ENCODE measurements at regions of chr4 and their contacts with region 1.

Region 1: DNA sequence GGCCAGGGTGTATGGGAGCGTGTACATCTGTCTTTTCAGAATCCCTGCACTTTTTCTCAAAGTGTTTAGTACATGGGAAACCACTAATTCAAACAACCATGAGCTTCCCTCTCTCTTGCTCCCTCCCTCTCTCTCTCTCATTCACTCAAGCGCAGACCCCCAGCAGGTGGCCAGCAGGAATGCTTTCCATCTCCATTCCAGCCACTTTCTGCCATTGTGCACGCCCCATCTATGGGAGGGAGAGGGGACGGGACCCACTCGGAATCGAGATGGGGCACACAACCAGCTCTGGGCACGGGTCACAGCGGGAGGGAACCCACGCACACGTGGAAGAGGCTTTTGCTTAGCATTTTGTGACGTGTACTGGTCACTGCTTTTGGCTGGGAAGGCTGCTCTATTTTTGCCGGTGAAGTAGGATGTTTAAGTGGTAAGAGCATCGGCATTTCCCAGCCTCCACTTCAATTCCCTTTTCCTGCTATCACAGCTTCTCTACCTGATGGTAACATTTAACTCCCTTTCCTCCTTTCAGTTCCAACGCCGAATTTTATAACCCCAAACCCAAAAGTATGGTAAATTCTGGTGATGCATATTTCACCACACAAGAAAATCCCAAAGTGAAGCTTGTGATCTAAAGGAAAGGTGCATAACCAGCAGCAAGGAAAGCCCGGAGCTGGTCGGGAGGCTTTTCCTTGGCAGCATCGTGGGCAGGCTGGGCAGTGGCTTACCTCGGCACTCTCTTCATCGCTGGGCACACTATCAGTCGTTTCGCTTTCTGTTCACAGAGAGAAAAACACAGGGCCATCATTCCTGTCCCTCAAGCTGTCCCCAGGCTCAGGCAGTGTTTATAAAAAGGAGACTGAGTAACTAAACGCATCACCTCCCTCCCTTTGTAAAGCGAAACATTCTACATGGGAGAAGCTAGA is 84.1 kb downstream of the IRF2 start:
- DNase-seq: no peak

Region 2: DNA sequence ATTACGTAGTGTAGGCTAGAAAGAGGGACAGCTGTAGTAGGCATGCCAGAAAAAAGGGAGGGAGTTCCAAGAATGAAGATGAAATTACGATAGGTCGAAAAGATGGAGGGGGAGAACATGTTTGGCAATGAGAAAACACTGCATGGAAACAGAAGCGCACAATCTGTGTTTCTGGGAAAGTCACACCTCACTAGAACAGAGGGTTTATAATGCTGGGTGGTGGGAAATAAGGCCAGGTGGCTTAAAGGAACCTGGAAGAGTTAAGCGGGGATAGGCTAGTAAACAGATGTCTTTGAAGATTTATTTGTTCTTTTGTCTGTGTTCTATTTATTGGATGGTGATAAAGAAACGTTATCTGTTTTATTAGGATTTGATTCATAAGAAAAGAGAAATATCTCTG is 702.0 kb before region 1 on chr4:
- intact Hi-C with region 1: no loop called
- DNase-seq: no peak

Region 3: DNA sequence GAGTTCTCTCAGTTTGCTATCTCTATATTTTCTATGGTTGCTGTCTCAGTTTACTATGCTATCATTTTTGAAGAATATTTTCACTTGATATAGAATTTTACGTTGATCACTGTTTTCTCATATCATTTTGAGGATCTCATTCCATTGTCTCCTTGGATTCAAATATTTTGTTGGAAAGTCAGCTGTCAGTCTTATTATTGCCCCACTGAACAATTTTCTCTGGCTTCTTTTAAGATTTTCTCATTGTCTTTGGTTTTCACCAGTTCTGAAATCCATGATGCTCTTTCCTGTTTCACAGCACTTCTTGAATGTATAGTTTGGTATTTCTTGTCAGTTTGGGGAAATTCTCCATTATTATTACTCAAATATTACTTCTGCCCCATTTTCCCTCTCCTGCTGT is 253.7 kb before region 1 on chr4:
- intact Hi-C with region 1: no loop called
- DNase-seq: no peak

Region 4: GRCh38 chr4:184410748-184411147 is 20.5 kb after region 1 on chr4:
- intact Hi-C with region 1: loop called in 1 of 2 experiments (anchors 1 kb)
- DNase-seq: no peak

Region 5: DNA sequence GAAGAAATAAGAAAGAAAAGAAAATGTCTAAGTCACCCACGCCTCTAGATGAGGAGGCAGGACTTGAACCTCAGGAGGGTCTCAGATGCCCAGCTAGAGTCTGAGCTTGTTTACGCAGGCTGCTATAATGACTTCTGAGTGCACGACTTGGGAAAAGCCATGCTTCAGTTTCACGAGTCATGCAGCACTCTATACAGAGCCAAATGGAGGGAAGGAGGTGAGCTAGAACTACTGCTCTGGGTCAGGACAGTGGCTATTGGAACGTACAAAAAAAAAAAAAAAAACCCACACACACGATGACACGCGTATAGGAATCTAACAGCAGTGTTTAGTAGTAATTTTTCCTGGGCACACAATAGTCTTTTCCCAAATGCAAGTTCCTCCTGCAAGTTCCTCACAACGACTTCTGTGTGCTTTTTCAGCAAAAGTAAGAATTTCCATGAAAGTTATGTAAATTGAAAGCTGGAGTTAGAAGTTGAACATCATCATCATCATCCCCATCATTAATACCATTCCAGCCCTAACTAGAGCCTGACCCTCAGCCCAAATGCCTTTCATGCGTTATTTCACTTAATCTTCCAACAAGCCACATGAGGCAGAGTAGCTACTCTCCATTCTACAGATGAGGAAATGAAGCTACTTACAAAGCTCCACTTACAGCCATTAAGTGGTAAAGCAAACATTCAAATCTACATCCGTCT is 47.5 kb after region 1 on chr4:
- intact Hi-C with region 1: no loop called
- DNase-seq: no peak

Region 6: GRCh38 chr4:184472614-184473498 is 82.6 kb after region 1 on chr4:
- intact Hi-C with region 1: no loop called
- DNase-seq: peak; percentile 95